ENCODE measurements at regions of chr6 and their contacts with region 1.

Region 1: DNA sequence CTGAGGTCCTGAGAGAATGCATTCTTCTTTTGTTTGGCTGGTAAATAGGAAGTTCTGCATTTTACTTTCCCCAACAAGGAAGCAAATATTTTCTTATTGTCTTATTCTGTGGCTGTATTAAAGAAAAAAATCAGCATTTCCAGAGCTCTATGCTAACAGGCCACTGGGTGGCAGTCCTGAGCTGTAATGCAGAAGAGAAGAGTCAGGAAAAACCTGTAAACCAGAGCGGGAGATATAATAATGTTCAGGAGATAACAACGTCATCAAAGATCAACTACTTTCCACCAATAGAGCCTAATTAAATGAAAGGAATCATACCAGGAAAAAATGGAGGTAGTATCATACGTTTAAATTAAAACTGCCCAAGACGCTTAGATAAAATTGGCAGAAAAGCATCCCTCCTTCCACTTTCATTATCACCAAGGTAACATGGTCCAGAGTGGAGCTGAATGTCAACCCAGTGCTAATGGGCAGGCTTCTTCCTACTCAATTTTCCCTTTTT is 55.6 kb upstream of the CARMIL1 start:
- DNase-seq: peak; percentile 59 to 88 (median 73)
- H3K4me3 ChIP-seq: peak overlapping the region in 1 of 4 donors; percentile 48
- H3K27ac ChIP-seq: no peak overlapping the region
- H3K4me1 ChIP-seq: peaks cover 11 to 48% of the 10 kb centered on the region in 2 donors
- H3K27me3 ChIP-seq: no peaks in the 10 kb centered on the region
- CTCF ChIP-seq: peak; percentile 84 to 96 (median 88)
- POLR2A ChIP-seq: no peak

Region 2: GRCh38 chr6:24968786-24969185 is 254.8 kb before region 1 on chr6:
- intact Hi-C with region 1: no loop called
- DNase-seq: no peak
- H3K4me3 ChIP-seq: no peak overlapping the region
- H3K27ac ChIP-seq: no peak overlapping the region
- H3K4me1 ChIP-seq: no peaks in the 10 kb centered on the region
- H3K27me3 ChIP-seq: no peaks in the 10 kb centered on the region
- CTCF ChIP-seq: no peak
- POLR2A ChIP-seq: no peak

Region 3: DNA sequence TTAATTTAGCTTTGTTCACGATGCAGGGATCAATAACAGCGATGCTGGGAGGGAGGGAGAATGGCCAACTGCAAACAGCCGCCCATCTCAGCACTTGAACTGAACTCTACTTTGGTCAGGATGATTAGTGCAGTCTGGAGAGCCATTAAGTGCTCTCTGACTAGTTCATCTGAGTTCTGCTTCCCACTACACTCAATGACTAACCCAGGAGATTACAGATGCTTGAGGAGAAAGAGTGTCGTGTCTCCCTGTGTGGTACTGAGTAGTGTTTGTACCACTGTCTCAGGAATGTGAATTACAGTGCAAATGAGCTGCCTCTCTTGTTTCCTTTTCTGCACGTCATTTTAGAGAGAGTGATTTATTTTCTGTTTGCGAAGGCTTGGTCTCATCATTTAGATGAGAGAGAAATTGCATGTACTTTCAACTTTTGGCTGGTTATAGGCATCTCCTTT is 79.2 kb after region 1 on chr6:
- intact Hi-C with region 1: no loop called
- DNase-seq: no peak
- H3K4me3 ChIP-seq: no peak overlapping the region
- H3K27ac ChIP-seq: peak overlapping the region in 2 of 5 donors; percentile 15 to 33
- H3K4me1 ChIP-seq: peaks cover 0 to 31% of the 10 kb centered on the region in 2 donors
- H3K27me3 ChIP-seq: no peaks in the 10 kb centered on the region
- CTCF ChIP-seq: no peak
- POLR2A ChIP-seq: no peak

Region 4: GRCh38 chr6:25717866-25718740 is 494.6 kb after region 1 on chr6:
- intact Hi-C with region 1: loop called in 1 of 2 experiments (anchors 10 kb)
- DNase-seq: peak in 2 of 7 donors; percentile 14 to 24
- H3K4me3 ChIP-seq: no peak overlapping the region
- H3K27ac ChIP-seq: no peak overlapping the region
- H3K4me1 ChIP-seq: no peaks in the 10 kb centered on the region
- H3K27me3 ChIP-seq: no peaks in the 10 kb centered on the region
- CTCF ChIP-seq: peak; percentile 37 to 71 (median 54)
- POLR2A ChIP-seq: no peak

Measured in adrenal gland (tissue), 19 donors.